Heart right ventricle (tissue), 16 donors: ENCODE measurements at regions of chr4 and their contacts with region 1.

Region 1: DNA sequence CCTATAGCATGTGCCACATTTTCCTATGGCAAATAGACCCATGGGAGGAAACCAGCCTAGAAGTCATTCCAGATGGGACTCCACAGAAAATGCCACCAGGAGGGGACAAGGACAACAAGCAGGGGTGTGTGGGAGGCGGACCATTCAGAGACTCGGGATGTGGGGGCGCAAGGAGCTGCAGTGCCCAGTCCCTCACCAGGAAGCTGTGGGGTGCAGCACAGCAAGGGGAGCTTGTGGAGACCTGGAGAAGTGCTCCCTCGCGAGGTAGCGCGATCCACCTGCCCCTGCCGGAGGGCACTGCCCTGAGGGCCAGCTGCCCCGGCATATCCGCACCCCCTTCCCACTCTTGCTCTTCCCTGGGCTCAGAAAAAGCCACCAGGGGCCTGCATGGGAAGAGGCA is 45.5 kb upstream of the C4orf50 start:
- DNase-seq: no peak
- ATAC-seq: no peak
- H3K4me3 ChIP-seq: no peak overlapping the region
- H3K27ac ChIP-seq: no peak overlapping the region
- H3K4me1 ChIP-seq: no peaks in the 10 kb centered on the region
- H3K27me3 ChIP-seq: peaks cover 0 to 18% (median 0%) of the 10 kb centered on the region in 7 donors
- CTCF ChIP-seq: no peak

Region 2: DNA sequence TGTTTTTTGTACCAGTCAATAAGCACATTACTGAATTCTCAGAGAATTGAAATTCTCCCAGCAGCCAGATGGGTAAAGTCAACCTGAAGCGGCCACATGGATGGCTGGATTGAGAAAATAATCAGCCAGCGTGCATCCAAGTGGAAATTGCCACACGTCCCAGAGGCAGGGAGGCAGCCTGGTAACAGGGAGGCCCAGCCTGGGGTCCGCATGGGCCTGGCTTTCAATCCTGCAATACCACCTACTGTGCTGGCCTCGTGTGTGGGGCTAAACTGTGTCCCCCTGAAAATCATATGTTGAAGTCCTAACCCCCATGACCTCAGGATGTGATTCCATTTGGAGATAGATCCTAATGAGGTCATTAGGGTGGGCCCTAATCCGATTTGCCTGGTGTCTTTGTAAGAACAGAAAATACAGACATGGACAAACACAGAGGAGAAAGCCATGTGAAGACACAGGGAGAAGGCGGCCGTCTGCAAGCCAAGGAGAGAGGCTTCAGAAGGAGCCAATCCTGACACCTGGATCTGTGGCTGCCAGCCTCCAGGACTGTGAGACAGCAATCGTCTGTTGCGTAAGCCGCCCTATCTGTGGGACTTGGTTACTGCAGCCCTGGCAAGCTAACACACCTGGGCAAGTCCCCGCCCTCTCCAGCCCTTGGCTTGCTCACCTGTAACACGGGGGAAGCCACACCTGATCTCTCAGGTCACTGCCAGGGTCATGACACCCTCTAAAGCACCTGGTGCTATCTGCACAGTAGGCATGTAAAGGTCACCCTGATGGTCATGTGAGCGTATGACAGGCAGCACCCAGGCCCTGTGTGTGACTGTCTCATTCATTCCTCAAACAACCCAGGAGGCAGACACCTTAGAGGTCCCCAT is 46.4 kb after region 1 on chr4:
- intact Hi-C with region 1: loop called in 1 of 10 experiments (anchors 5 kb)
- DNase-seq: no peak
- ATAC-seq: peak in 1 of 8 donors; percentile 23
- H3K4me3 ChIP-seq: no peak overlapping the region
- H3K27ac ChIP-seq: no peak overlapping the region
- H3K4me1 ChIP-seq: no peaks in the 10 kb centered on the region
- H3K27me3 ChIP-seq: peaks cover 0 to 83% (median 46%) of the 10 kb centered on the region in 7 donors
- CTCF ChIP-seq: no peak

Region 3: DNA sequence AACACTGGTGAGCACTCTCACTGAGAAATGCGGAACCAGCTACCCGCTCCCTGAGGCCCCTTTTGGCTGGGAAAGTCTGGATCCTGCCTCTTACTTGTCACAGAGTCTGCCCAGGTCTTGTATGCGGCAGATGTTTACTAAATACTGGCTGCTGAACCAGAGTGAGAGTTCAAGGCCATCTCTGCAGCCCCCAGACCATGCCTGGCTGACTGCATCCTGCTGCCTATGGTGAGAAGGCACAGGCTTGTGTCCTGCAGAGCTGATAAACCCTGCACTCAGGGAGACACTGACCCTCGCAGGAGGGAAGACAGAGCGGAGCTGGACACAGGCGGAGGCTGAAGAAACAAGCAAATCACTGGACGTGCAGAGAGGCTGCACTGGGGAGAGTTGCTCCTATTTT is 90.2 kb after region 1 on chr4:
- intact Hi-C with region 1: no loop called
- DNase-seq: no peak
- ATAC-seq: no peak
- H3K4me3 ChIP-seq: no peak overlapping the region
- H3K27ac ChIP-seq: no peak overlapping the region
- H3K4me1 ChIP-seq: no peaks in the 10 kb centered on the region
- H3K27me3 ChIP-seq: peaks cover 0 to 61% (median 22%) of the 10 kb centered on the region in 7 donors
- CTCF ChIP-seq: no peak

Region 4: GRCh38 chr4:6999172-7000055 is 935.7 kb after region 1 on chr4:
- intact Hi-C with region 1: no loop called
- DNase-seq: no peak
- ATAC-seq: peak in 1 of 8 donors; percentile 23
- H3K4me3 ChIP-seq: no peak overlapping the region
- H3K27ac ChIP-seq: peak overlapping the region in 1 of 10 donors; percentile 37
- H3K4me1 ChIP-seq: no peaks in the 10 kb centered on the region
- H3K27me3 ChIP-seq: no peaks in the 10 kb centered on the region
- CTCF ChIP-seq: no peak